GM10248 (cell line): ENCODE measurements at regions of chr7 and their contacts with region 1.

Region 1: DNA sequence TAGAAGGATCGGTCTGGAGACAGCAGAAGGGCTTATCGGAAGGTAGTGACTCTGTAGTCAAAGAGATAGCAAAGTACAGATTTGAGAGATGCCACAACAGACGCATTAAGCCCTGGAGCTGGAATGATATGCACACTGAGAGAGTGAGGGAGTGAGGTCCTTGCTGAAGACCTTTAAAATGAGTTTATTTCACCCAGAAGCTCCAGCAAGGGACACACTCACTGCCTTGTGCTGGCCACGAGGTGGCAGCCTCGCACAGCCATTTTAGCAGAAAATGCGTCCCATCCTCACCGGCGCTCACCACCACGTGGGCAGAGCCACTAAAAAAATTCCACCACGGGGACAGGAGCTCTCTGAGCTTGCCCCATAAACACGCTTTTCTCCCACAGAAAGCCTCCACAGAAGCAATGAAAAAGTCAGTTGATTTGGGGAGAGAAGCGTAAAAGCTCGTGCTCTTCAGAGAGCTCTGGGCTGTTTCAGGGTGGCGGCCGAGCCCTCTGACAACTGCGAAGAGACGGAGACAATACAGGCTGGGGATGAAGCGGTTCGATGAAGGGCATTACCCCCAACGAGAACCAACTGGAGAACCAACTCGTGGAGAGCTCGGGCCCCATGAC is 163.0 kb upstream of the KLF14 start:
- DNase-seq: peak; percentile 75
- CTCF ChIP-seq: peak; percentile 82

Region 2: GRCh38 chr7:130781346-130781745 is 115.7 kb before region 1 on chr7:
- CTCF ChIA-PET with region 1: no interaction called
- POLR2A ChIA-PET with region 1: no interaction called
- DNase-seq: no peak
- CTCF ChIP-seq: no peak

Region 3: GRCh38 chr7:130875265-130875741 is 21.7 kb before region 1 on chr7:
- CTCF ChIA-PET with region 1: interaction called, 116 read pairs
- POLR2A ChIA-PET with region 1: no interaction called
- DNase-seq: peak; percentile 67
- CTCF ChIP-seq: peak; percentile 77

Region 4: DNA sequence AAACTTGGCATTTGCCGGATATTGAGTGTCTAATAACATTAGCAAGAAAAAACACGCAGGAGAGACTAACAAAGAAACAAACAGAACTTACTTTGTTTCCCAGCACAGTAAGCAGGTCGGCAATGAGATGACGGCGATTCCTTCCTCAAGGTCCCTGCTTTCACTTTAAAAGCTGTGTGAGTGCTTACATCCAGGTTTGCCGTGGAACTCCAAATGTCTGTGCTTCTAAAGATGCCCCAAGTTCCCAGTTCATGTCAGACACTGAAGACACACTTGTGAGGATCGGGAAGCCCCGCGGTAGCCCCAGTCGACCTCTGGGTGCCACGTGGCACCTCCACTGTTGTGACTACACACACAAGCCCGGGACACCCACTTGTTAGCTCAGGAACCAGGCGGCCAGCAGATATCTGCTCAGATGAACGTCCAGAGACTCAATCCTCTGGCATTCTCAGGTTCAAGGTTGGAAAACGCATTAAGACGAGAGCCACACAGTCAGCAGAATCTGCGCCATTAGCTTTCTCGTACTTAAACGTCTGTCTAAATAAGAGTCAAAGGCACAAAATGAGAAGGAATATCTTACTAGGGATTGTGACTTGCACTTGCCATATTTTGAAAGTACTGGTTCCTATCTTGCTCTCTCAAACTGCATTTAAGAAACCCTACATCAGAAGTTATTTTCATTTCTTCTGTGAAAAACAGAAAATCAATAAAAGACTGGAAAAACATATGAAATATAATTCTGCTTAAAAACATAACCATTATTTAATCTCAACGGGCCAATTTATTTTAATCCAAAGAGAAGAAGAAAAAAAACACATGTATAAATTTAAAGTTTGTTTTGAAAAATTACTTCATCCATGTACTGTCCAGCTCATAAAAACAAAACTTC is 44.6 kb after region 1 on chr7:
- CTCF ChIA-PET with region 1: interaction called, 32 read pairs
- POLR2A ChIA-PET with region 1: interaction called, 3 read pairs
- DNase-seq: no peak
- CTCF ChIP-seq: no peak

Region 5: GRCh38 chr7:130966246-130967009 is 69.4 kb after region 1 on chr7:
- CTCF ChIA-PET with region 1: interaction called, 14 read pairs
- POLR2A ChIA-PET with region 1: no interaction called
- DNase-seq: no peak
- CTCF ChIP-seq: no peak

Region 6: GRCh38 chr7:131007394-131008330 is 110.7 kb after region 1 on chr7:
- CTCF ChIA-PET with region 1: interaction called, 28 read pairs
- POLR2A ChIA-PET with region 1: no interaction called
- DNase-seq: peak; percentile 55
- CTCF ChIP-seq: peak; percentile 53

Region 7: DNA sequence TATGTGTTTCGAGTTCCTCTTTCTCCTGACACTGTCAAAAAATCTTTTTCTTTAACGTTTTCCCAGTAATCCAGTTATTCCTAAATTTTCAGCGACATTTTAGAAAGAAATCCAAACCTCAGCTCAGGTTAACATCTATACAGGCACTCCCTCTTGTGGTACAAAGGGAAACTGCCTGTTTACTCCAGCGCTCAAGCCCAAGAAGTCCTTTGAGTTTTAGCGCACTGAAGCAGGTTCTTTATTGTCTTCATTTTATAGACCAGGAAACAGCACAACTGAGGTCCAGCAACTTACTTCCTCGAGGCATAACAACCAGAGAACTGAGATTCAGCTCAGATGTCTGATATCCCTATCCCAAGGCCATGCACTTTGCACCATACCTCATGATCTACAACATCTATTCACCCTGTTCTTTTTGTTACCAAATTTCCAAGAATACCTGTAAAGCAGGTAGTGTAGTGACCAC is 143.5 kb after region 1 on chr7:
- CTCF ChIA-PET with region 1: interaction called, 141 read pairs
- POLR2A ChIA-PET with region 1: interaction called, 4 read pairs
- DNase-seq: peak; percentile 64
- CTCF ChIP-seq: peak; percentile 79

Region 8: GRCh38 chr7:131080754-131081153 is 183.7 kb after region 1 on chr7:
- CTCF ChIA-PET with region 1: no interaction called
- POLR2A ChIA-PET with region 1: no interaction called
- DNase-seq: no peak
- CTCF ChIP-seq: no peak

Region 9: GRCh38 chr7:131507592-131508331 is 610.8 kb after region 1 on chr7:
- CTCF ChIA-PET with region 1: interaction called, 20 read pairs
- POLR2A ChIA-PET with region 1: no interaction called
- DNase-seq: peak; percentile 80
- CTCF ChIP-seq: peak; percentile 90